ENCODE measurements at regions of chr17 and their contacts with region 1.

Region 1: DNA sequence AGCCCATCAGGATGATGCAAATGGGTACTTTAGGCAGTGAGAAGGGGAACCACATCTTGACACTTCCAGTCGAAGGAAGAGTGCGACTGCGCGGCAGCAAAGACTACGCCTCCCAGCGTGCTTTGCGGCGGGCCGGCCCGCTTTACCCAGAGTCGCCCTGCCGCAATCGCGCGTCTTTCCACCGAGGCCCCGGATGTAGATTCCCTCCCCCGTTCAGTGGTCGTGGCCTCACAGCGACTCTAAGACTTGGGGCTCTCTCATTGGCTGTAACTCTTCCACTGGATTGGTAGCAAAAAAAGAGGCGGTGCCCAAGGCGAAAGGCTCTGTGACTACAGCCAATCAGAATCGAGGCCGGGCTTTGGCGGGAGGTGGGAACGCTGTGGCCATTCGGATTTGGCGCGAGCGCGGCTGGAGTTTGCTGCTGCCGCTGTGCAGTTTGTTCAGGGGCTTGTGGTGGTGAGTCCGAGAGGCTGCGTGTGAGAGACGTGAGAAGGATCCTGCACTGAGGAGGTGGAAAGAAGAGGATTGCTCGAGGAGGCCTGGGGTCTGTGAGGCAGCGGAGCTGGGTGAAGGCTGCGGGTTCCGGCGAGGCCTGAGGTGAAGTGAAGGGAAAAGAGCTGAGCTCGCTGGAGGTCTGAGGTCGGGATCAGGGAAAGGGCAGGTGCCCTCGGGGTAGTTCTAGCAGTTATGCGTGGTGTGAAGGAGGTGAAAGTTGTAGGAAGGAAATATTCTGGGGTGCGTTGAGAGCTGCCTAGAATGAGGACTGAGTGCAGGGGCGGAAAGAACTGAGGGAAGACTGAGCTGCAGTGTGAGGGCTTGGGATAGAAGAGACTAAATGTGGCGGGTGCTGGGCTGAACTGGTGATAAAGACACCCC is at the start of gene CDC6:
- DNase-seq: peak; percentile 98 to 100 (median 99)

Region 2: GRCh38 chr17:40019140-40019991 is 268.4 kb before region 1 on chr17:
- intact Hi-C with region 1: loop called (anchors 10 kb)
- DNase-seq: peak in 2 of 10 donors; percentile 76

Region 3: DNA sequence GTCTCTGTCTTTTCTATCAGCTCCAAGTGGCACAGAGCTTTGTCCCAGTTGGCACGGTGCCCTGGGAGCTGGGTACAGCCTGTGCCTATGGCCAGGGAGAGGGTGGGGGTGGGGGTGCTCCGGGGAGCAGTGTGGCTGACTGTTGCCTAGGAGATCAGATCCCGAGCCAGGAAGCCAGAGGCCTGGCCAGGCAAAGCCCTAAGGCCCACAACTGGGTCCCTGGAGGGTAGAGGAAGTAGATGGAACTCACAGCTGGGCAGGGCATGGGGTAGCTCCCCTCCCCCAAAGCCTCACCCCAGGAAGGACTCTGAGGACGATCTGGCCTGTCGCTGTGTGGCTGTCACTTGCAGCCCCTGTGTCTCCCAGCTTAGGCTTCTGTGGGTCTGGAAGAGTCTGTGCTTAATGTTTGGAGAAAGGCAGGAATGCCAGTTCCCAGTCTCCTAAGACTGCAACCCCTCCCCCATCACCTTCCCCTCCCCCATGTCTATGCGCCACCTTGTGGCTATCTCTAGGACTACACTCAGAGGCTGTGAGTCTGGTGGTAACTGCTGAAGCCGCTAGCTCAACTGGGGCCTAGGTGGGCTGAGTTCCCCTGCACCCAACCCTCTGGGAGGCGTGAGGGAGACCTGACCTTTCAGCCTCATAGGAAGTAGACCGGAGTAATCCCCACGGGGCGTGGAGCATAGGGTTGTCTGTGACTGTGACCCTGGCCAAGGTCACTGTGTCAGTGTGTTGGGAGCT is 212.4 kb before region 1 on chr17:
- intact Hi-C with region 1: no loop called
- DNase-seq: peak in 8 of 10 donors; percentile 74 to 96 (median 86)

Region 4: DNA sequence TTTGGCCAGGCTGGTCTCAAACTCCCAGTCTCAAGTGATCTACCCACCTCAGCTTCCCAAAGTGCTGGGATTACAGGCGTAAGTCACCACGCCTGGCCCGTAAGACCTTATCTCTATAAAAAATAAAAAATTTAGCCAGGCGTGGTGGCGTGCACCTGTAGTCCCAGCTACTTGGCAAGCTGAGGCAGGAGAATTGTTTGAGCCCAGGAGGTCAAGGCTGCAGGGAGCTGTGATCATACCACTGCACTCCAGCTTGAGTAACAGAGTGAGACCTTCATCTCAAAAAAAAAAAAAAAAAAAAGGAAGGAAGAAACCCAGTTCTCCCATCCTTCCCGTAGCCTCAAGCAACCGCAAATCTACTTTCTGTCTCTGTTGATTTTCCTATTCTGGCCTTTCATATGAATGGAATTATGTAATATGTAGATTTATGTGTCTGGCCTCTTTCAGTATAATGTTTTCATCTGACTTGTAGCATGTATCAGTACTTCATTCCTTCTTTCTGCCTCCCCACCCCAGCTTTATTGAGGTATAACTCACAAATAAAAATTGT is 136.2 kb before region 1 on chr17:
- intact Hi-C with region 1: no loop called
- DNase-seq: no peak

Region 5: DNA sequence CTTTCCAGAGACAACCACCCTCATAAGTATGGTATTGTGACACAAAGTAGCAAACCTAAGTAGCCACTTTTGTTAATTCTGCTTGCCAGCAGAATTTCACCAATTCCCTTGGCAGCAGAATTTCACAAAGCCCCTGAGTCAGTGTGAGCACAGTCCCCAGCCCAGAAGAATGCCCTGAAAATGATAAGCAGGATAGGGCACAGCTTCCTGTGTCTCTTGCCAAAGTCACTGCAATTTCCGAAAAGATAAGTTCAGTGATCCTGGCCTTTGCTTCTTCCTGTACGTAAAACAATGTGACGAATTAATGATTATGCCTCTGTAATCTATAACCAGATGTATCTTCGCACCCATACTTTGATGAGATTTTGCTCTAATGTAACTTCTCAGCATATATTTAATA is 84.6 kb before region 1 on chr17:
- intact Hi-C with region 1: loop called (anchors 2 kb)
- DNase-seq: no peak

Region 6: GRCh38 chr17:40219073-40219860 is 68.5 kb before region 1 on chr17 and contains the start of gene WIPF2:
- intact Hi-C with region 1: loop called (anchors 5 kb)
- DNase-seq: peak; percentile 93 to 99 (median 96)

Region 7: DNA sequence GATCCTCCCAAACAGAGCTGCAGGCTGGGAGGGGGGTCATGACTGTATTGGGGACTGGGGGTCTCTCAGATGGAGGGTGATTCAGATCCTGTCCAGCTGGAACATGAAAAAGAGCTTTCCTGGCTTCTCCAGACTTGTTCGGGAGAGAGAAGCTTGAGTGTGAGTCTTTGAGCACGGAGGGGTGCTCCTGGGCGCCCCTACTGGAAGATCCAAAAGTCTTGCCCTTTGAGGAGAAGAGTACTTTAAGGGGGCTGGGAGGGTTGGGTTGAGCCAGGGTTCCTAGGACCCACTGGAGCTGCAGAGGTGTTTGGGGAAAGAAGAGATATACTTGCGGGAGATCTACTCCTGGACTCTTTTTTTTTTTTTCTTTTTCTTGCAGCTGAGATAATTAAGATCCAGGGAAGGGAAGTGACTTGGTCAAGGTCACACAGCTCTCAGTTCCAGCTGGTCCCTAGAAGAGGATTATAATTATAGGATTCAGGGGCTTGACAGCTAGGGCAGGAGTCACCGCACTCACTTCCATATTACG is 29.7 kb after region 1 on chr17:
- intact Hi-C with region 1: no loop called
- DNase-seq: no peak